GM12878 (cell line): ENCODE measurements at regions of chr3 and their contacts with region 1.

Region 1: DNA sequence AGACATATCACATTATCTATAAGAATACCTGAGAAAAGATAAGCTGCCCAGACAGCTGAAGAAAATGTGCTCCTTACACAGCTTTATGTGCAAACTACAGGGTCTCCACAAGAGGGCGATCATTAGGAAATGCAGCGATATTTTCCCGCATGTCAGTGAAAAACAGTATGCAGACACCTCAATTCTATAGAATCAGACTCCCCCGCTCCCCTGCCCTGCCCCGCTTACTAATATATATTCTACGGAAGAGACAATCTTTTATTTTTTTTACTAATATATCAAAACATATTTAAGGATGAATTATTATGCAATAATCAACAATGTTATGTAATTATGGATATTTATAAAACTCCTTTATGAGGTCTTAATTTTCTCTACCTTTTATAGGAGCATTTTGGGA is 681.3 kb downstream of the ROBO1 start:
- DNase-seq: no peak
- ATAC-seq: peak; percentile 88
- H3K4me3 ChIP-seq: no peak overlapping the region
- H3K27ac ChIP-seq: no peak overlapping the region
- H3K4me1 ChIP-seq: no peaks in the 10 kb centered on the region
- H3K27me3 ChIP-seq: no peaks in the 10 kb centered on the region
- CTCF ChIP-seq: peak; percentile 66 to 71 (median 71)
- EP300 ChIP-seq: no peak
- POLR2A ChIP-seq: no peak
- RAD21 ChIP-seq: peak; percentile 51

Region 2: DNA sequence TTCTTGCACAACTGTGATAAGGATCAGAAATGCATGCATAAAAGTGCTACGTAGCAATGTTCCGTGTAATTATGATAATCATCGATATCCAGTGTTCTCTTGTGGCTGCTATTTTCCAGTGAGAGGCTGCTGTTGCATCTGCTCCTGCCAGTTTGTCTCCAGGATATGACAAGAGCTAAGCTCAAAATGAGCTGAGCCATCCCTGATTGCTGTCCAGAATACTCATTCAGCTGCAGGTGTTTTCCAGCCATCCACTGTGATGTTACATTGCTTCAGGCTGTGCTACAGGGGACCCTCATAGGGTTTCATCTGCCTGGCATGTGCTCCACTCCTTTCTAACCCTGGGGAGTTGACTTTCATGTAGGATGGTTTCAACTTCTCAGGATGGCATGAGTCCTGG is 294.8 kb before region 1 on chr3:
- CTCF ChIA-PET with region 1: no interaction called
- POLR2A ChIA-PET with region 1: no interaction called
- RAD21 ChIA-PET with region 1: no interaction called
- SMC1A ChIA-PET with region 1: no interaction called
- in situ Hi-C with region 1: no loop called
- intact Hi-C with region 1: no loop called
- DNase-seq: no peak
- ATAC-seq: no peak; the same call in 1 of the 3 replicates
- H3K4me3 ChIP-seq: no peak overlapping the region
- H3K27ac ChIP-seq: no peak overlapping the region
- H3K4me1 ChIP-seq: no peaks in the 10 kb centered on the region
- H3K27me3 ChIP-seq: no peaks in the 10 kb centered on the region
- CTCF ChIP-seq: no peak
- EP300 ChIP-seq: no peak
- POLR2A ChIP-seq: no peak
- RAD21 ChIP-seq: no peak

Region 3: GRCh38 chr3:79032686-79033318 is 53.7 kb before region 1 on chr3:
- CTCF ChIA-PET with region 1: interaction called, 10 read pairs
- POLR2A ChIA-PET with region 1: no interaction called
- RAD21 ChIA-PET with region 1: interaction called, 6 read pairs
- SMC1A ChIA-PET with region 1: no interaction called
- in situ Hi-C with region 1: no loop called
- intact Hi-C with region 1: no loop called
- DNase-seq: no peak
- ATAC-seq: peak; percentile 78
- H3K4me3 ChIP-seq: no peak overlapping the region
- H3K27ac ChIP-seq: no peak overlapping the region
- H3K4me1 ChIP-seq: no peaks in the 10 kb centered on the region
- H3K27me3 ChIP-seq: no peaks in the 10 kb centered on the region
- CTCF ChIP-seq: peak; percentile 35 to 59 (median 35); a peak in 5 of 6 replicates
- EP300 ChIP-seq: no peak
- POLR2A ChIP-seq: no peak
- RAD21 ChIP-seq: peak; percentile 77

Region 4: GRCh38 chr3:79067734-79068133 is 18.8 kb before region 1 on chr3:
- CTCF ChIA-PET with region 1: interaction called, 6 read pairs
- POLR2A ChIA-PET with region 1: no interaction called
- RAD21 ChIA-PET with region 1: interaction called, 4 read pairs
- SMC1A ChIA-PET with region 1: interaction called, 5 read pairs
- in situ Hi-C with region 1: no loop called
- intact Hi-C with region 1: loop called (anchors 1 kb)
- DNase-seq: no peak
- ATAC-seq: no peak
- H3K4me3 ChIP-seq: no peak overlapping the region
- H3K27ac ChIP-seq: no peak overlapping the region
- H3K4me1 ChIP-seq: no peaks in the 10 kb centered on the region
- H3K27me3 ChIP-seq: no peaks in the 10 kb centered on the region
- CTCF ChIP-seq: no peak
- EP300 ChIP-seq: no peak
- POLR2A ChIP-seq: no peak
- RAD21 ChIP-seq: no peak

Region 5: DNA sequence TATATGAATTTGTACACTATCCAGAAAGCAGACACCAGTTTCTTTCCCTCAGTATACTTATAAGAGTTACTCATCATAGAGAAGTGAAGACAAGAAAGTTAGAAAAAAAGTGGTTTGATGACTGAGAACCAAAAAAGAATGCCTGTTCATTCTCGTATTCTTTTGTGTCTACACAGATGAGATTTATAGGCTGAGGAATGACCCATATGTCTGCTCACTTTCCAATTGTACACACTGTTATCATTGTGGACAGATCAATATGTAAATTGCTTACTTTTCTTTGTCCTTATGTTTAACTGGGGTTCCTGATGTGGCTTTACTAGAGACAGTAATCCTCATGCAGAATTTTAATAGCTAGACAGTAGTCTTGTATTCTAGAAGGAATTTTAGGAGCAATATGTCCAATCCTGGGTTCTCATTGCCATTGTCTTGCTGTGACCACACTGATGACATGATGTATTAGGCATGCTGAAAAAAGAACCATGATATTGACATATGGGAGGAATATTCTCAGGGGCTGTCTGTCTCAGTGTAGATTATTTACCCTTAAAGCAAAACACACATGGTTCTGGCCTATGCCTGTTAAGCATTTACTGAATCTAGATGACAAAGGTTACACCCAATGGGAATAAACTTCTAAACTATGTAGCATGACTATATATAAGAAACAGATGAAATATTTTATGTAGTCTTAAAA is 11.6 kb after region 1 on chr3:
- CTCF ChIA-PET with region 1: interaction called, 15 read pairs
- POLR2A ChIA-PET with region 1: no interaction called
- RAD21 ChIA-PET with region 1: interaction called, 4 read pairs
- SMC1A ChIA-PET with region 1: interaction called, 5 read pairs
- in situ Hi-C with region 1: no loop called
- intact Hi-C with region 1: no loop called
- DNase-seq: no peak
- ATAC-seq: no peak
- H3K4me3 ChIP-seq: no peak overlapping the region
- H3K27ac ChIP-seq: no peak overlapping the region
- H3K4me1 ChIP-seq: no peaks in the 10 kb centered on the region
- H3K27me3 ChIP-seq: no peaks in the 10 kb centered on the region
- CTCF ChIP-seq: no peak
- EP300 ChIP-seq: no peak
- POLR2A ChIP-seq: no peak
- RAD21 ChIP-seq: no peak

Region 6: GRCh38 chr3:79361748-79362378 is 275.3 kb after region 1 on chr3:
- CTCF ChIA-PET with region 1: interaction called, 222 read pairs
- POLR2A ChIA-PET with region 1: no interaction called
- RAD21 ChIA-PET with region 1: interaction called, 124 read pairs
- SMC1A ChIA-PET with region 1: interaction called, 88 read pairs
- in situ Hi-C with region 1: loop called (anchors 10 kb)
- intact Hi-C with region 1: loop called (anchors 1 kb)
- DNase-seq: no peak
- ATAC-seq: peak; percentile 77
- H3K4me3 ChIP-seq: no peak overlapping the region
- H3K27ac ChIP-seq: no peak overlapping the region
- H3K4me1 ChIP-seq: no peaks in the 10 kb centered on the region
- H3K27me3 ChIP-seq: no peaks in the 10 kb centered on the region
- CTCF ChIP-seq: peak; percentile 62 to 70 (median 64)
- EP300 ChIP-seq: no peak
- POLR2A ChIP-seq: no peak
- RAD21 ChIP-seq: peak; percentile 73

Region 7: DNA sequence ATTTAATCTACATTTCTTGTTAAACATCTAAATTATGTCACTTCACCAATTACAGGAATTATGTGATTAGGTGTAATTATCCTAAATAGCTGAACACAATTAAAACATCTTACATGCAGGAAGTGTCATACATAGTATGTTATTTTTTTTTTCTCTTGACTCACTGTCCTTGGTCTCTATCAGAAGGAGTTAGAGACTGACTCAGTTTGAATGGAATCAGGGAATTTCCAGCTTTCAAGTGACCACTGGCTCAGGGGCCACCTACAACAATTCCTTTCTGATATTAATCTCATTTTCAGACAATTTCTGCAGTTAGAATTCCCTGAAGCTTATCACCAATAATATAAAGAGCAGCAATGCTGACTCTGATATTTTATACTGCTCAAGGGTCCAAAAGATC is 280.6 kb after region 1 on chr3:
- CTCF ChIA-PET with region 1: interaction called, 222 read pairs
- POLR2A ChIA-PET with region 1: no interaction called
- RAD21 ChIA-PET with region 1: interaction called, 124 read pairs
- SMC1A ChIA-PET with region 1: interaction called, 88 read pairs
- in situ Hi-C with region 1: loop called (anchors 10 kb)
- intact Hi-C with region 1: no loop called
- DNase-seq: no peak
- ATAC-seq: no peak
- H3K4me3 ChIP-seq: no peak overlapping the region
- H3K27ac ChIP-seq: no peak overlapping the region
- H3K4me1 ChIP-seq: no peaks in the 10 kb centered on the region
- H3K27me3 ChIP-seq: no peaks in the 10 kb centered on the region
- CTCF ChIP-seq: no peak
- EP300 ChIP-seq: no peak
- POLR2A ChIP-seq: no peak
- RAD21 ChIP-seq: no peak

Region 8: DNA sequence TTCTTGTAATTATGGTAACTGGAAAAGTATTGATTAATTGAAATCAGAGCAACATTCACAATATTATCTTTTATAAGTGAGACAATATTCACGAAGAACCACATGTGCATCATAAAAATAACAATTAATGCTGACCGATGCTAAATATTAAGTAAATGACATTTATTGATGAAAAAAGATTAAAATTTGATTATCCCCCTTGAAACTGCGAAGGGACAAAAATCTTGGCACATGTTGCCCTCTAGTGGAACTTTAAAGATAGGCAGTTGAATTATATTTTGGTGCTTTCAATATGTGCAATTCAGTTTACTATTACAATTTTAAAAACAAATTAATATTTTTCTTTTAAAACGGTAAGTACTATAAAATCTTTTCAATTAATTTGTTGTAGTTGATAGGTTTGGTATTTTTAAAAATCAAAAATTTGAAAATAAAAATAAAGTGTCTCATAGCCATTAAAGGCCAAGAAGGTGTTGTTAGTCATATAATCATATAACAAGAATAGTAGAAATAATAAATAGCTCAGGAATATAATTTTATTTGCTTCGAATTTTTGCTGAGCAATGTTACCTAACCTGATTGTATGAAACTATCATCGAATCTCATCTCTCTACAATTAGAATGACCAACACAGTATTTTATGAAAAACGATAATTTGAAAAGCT is 411.1 kb after region 1 on chr3:
- CTCF ChIA-PET with region 1: interaction called, 8 read pairs
- POLR2A ChIA-PET with region 1: no interaction called
- RAD21 ChIA-PET with region 1: interaction called, 4 read pairs
- SMC1A ChIA-PET with region 1: no interaction called
- in situ Hi-C with region 1: no loop called
- intact Hi-C with region 1: loop called (anchors 5 kb)
- DNase-seq: no peak
- ATAC-seq: no peak
- H3K4me3 ChIP-seq: no peak overlapping the region
- H3K27ac ChIP-seq: no peak overlapping the region
- H3K4me1 ChIP-seq: no peaks in the 10 kb centered on the region
- H3K27me3 ChIP-seq: no peaks in the 10 kb centered on the region
- CTCF ChIP-seq: peak; percentile 46 to 54 (median 46); a peak in 5 of 6 replicates
- EP300 ChIP-seq: no peak
- POLR2A ChIP-seq: no peak
- RAD21 ChIP-seq: peak; percentile 47